Activated CD8-positive, alpha-beta T cell treated with anti-CD3 and anti-CD28 coated beads for 36 hours (primary cell): ENCODE measurements at regions of chr9 and their contacts with region 1.

Region 1: DNA sequence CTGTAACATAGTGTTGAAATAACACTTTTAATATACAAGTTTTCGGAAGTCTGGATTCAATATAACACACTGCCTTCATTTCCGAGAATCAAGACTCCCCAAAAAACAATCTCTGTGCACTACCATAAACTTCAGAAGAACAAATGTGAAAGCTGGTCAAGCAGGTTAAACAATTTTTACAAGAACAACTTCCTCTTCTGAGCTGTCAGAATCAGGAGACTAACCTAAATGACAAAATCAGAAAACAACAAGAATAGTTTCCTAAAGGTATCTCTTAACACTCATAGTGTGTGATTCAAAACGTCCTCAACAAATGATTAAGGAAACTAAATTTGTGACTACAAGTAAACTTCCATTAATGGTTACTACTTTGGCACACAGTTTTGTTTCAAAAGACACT is 11.6 kb downstream of the C9orf72 start:
- DNase-seq: no peak
- ATAC-seq: peak; percentile 10
- H3K4me3 Mint-ChIP-seq: no peak overlapping the region
- H3K27ac Mint-ChIP-seq: no peak overlapping the region
- H3K4me1 Mint-ChIP-seq: peaks cover 21% of the 10 kb centered on the region
- H3K27me3 Mint-ChIP-seq: no peaks in the 10 kb centered on the region
- CTCF ChIP-seq: no peak

Region 2: DNA sequence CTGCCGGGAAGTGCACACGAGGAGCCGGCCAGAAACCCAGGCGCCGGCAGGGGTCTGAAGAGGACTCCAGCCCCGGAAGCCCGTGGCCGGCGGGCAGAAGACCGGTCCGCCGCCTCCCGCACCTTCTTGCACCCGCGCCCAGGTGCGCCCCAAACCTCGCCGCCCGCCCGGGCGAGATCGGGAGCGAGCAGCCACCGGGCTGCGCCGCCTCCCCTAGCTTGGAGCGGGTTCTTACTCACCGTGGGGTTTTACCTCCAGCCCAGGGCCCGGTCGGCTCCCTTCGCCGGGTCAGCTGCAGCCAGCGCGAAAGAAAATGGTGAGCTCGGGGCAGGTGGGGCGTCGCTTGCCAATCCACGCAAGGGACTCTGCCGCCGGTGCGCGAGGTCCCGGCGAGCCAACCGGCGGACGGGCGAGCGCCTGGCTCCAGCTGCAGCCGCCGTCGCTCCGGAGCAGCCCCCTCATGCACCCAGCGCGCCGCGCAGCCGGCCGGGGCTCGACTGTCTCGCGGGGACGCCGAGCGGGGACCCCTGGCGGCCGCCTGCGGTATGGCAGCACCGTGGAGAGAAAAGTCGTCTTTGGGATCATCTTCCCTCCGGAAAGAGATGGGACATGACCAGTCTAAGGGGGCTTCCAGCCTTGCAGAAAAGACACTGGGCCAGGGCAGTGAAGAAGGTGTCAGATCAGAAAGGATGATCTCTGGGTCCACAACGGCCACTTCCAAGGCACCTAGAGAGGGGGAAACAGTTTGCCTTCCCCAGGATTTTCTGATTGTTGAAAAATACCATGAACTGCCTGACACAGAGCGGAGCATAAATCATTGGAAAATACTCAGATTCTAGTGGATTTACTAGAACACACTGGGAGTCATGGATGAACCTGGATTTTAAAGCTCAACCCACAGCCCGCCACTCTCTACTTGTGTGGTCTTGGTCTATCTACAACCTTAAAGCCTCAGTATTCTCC is 32.1 kb before region 1 on chr9 and contains the start of gene MOB3B:
- CTCF ChIA-PET with region 1: interaction called, 18 read pairs
- POLR2A ChIA-PET with region 1: no interaction called
- intact Hi-C with region 1: no loop called
- DNase-seq: peak; percentile 82
- ATAC-seq: peak; percentile 90
- H3K4me3 Mint-ChIP-seq: peak within 1 kb of the TSS; percentile 82
- H3K27ac Mint-ChIP-seq: peak within 1 kb of the TSS; percentile 66
- H3K4me1 Mint-ChIP-seq: peaks cover 10% of the 10 kb centered on the region
- H3K27me3 Mint-ChIP-seq: peaks cover 13% of the 10 kb centered on the region
- CTCF ChIP-seq: peak; percentile 84
- total RNA-seq, gene MOB3B: 0.47 to 0.67 TPM

Region 3: DNA sequence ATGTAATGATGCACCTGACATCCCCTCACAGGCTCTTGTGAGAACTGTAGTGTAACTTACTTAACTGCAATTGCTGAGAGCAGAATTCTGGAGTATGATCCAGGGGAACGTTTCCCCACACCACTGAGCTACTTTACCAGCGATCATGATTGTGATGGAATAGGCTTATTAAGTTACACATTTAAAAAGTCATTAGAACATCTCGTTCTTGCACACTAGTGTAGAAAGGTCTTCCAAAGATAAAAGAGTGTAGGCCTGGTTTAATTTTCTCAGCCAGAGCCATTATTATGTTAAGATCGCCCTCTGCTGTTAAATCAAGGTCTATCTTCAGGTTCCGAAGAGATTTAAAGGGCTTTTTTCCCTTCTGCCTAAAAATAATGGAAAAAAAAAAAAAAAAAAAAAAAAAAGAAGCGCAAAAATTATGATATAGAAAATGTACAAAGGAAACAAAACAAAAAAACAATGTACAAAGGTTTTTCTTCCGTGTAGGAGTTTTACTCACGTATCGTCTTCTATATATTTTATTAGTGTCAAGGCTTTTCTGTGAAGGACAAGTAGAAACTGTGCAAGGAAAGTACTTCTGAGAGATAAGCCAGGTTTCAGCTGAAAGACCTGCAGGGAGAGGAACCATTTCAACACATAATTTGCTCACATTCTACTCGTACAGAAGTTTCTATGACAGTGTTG is 13.5 kb before region 1 on chr9:
- CTCF ChIA-PET with region 1: interaction called, 10 read pairs
- POLR2A ChIA-PET with region 1: no interaction called
- intact Hi-C with region 1: no loop called
- DNase-seq: no peak
- ATAC-seq: no peak
- H3K4me3 Mint-ChIP-seq: no peak overlapping the region
- H3K27ac Mint-ChIP-seq: no peak overlapping the region
- H3K4me1 Mint-ChIP-seq: no peaks in the 10 kb centered on the region
- H3K27me3 Mint-ChIP-seq: no peaks in the 10 kb centered on the region
- CTCF ChIP-seq: peak; percentile 52

Region 4: DNA sequence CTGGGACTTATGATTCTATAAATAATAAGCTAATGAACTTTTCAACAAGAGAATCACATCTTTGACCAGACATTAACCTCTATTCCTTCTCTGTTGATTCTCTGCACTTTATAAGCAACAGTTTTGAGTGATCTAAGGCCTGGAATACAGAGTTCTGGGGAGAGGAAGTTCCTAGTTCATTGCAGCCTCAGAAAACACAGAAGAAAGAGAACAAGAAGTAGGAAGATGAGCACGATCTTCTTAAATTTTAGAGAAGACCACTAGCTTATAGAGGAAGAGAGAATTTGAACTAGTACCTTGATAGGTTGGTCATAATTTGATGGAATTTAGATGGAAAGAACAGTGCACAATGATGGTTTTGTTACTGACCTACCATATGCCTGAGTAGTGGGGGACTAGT is 20.1 kb after region 1 on chr9:
- CTCF ChIA-PET with region 1: no interaction called
- POLR2A ChIA-PET with region 1: no interaction called
- intact Hi-C with region 1: no loop called
- DNase-seq: no peak
- ATAC-seq: no peak
- H3K4me3 Mint-ChIP-seq: no peak overlapping the region
- H3K27ac Mint-ChIP-seq: no peak overlapping the region
- H3K4me1 Mint-ChIP-seq: no peaks in the 10 kb centered on the region
- H3K27me3 Mint-ChIP-seq: peaks cover 9% of the 10 kb centered on the region
- CTCF ChIP-seq: no peak